ENCODE measurements at regions of chr10 and their contacts with region 1.

Region 1: GRCh38 chr10:71921324-71922027 is 42.7 kb upstream of the CHST3 start:
- DNase-seq: no peak
- H3K4me3 ChIP-seq: no peak overlapping the region
- H3K27ac ChIP-seq: no peak overlapping the region
- H3K4me1 ChIP-seq: peaks cover 41% of the 10 kb centered on the region
- H3K27me3 ChIP-seq: no peaks in the 10 kb centered on the region
- CTCF ChIP-seq: no peak

Region 2: DNA sequence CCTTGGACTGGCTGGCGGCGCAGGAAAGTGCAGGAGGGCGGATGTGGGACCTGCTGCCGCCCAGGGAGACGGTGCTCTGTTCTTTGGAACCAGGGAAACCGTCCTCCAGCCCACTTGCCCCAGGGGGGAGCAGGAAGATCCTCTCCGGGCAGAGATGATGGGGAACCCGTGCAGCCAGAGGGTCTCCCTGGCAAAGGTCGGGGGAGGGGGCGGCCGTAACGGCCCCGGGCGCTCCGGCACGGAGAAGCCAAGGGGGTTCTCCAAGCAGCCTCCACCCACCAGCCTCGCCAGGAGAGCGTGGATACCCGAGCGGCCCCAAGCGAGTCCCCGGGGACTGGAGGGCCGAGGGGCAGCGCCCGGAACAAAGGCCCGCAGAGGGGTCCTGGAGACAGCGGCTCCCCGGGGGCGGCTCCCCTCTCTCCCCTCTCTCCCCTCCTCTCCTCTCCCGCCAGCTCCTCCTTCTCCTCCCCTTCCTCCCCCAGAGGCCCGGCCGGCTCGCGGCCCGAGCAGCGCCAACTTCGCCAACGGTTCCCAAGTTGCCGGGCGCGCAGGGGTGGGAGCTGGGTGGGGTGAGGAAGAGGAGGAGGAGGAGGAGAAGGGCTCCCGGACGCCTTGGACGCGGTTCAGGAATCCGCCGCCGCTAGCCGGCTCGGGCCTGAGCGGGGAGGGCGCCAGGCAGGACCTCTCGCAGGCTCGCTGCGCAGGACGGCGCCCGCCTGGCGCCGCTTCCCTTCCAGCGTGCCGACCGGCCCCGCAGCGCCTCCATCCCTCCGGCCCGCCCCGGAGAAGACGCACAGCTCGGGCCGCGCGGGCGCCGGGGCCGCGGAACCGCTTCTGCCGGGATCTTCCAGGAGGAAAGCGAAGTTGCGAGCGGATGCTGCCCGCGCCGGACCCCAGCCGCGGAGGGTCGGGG is 42.5 kb after region 1 on chr10 and contains the start of gene CHST3:
- CTCF ChIA-PET with region 1: interaction called, 4 read pairs
- dilution Hi-C with region 1: no loop called
- in situ Hi-C with region 1: no loop called
- intact Hi-C with region 1: loop called (anchors 1 kb)
- DNase-seq: peak; percentile 54
- H3K4me3 ChIP-seq: peak within 1 kb of the TSS; percentile 73 to 85 (median 80)
- H3K27ac ChIP-seq: peak within 1 kb of the TSS; percentile 91
- H3K4me1 ChIP-seq: peaks cover 31% of the 10 kb centered on the region
- H3K27me3 ChIP-seq: no peaks in the 10 kb centered on the region
- CTCF ChIP-seq: no peak
- total RNA-seq, gene CHST3: 32.4 to 85.0 TPM

Region 3: DNA sequence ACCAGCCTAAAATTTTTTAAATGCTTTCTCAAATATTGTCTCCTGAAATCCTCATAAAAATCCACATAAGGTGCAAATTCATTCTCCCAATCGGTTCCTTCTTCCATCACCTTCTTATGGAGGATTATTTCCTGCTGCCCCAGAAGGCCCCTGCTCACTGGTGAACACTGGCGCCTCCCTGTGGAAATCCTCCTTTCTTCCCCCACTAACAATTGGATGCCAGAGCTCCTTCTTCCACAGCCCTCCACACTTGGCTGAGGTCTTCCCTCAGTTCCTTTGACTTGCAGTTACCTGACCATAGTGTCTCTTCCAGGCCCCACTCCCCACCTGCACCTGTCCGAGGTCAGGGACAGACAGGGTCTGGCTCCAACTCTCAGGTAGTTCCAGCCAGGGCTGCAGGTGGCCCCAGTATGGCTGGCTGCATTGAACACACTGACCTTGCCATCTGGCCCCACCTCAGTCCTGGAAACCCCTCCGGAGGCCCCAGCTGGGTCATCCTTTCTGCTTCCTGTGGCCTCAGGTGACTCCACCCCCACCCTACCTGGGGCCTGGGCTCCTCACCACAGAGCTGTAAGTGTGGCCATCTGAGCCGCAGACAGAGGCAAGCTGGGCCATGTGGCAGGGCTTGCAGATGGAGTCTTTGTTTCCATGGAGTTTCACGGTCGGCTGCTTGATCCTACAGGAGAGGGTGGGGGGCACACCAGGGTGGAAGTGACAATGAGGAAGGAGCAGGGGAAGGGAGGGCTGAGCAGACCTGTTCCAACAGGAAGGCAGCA is 148.5 kb after region 1 on chr10:
- CTCF ChIA-PET with region 1: interaction called, 13 read pairs
- dilution Hi-C with region 1: no loop called
- in situ Hi-C with region 1: no loop called
- intact Hi-C with region 1: no loop called
- DNase-seq: no peak
- H3K4me3 ChIP-seq: no peak overlapping the region
- H3K27ac ChIP-seq: no peak overlapping the region
- H3K4me1 ChIP-seq: no peaks in the 10 kb centered on the region
- H3K27me3 ChIP-seq: no peaks in the 10 kb centered on the region
- CTCF ChIP-seq: peak in 1 of 2 donors; percentile 30

Region 4: GRCh38 chr10:72215652-72216549 is 294.4 kb after region 1 on chr10 and contains the starts of genes ANAPC16 and ASCC1:
- CTCF ChIA-PET with region 1: no interaction called
- dilution Hi-C with region 1: no loop called
- in situ Hi-C with region 1: loop called in 1 of 2 experiments (anchors 25 kb)
- intact Hi-C with region 1: no loop called
- DNase-seq: peak; percentile 93
- H3K4me3 ChIP-seq: peak within 1 kb of the TSS; percentile 74 to 89 (median 87)
- H3K27ac ChIP-seq: peak within 1 kb of the TSS; percentile 91
- H3K4me1 ChIP-seq: peaks cover 13% of the 10 kb centered on the region
- H3K27me3 ChIP-seq: no peaks in the 10 kb centered on the region
- CTCF ChIP-seq: no peak
- total RNA-seq, gene ANAPC16: 66.4 to 87.2 TPM
- total RNA-seq, gene ASCC1: 40.2 to 54.5 TPM